HepG2 (cell line): ENCODE measurements at regions of chr7 and their contacts with region 1.

Region 1: DNA sequence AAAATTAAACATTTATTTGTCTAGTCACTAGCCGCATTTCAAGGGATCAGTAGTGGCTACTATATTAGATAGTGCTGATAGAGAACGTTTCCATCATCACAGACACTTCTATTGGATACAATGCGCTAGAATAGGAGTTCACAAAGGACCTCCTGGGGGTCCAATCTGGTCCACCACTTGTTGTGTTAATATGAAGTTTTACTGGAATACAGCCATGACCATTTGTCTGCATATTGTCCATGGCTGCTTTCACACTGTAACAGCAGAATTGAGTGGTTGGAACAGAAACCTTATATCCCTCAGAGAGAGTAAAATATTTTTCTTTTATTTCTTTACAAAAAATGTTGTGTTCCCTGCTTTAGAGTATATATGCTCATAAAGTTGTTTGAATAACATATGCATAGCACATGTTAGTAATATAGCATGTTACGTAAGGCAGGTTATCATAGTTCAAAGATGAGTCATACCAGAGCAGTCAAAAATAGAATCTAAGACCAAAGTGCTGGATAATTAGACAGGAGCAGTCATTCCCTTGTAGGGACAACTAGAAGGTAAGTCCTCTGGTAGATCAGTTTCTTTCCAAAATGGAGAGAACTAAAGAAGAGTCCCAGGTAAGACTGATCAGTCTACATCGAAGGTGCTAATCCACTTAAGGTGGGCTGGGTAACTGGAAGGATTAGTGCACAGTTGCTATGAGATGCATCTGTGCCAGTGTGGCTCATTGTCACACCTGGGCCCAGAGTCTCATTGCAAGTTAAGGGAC is 14.9 kb downstream of the BZW2 start:
- DNase-seq: peak; percentile 82
- ATAC-seq: peak; percentile 91
- H3K4me3 ChIP-seq: no peak overlapping the region; a peak in 2 of 6 replicates
- H3K27ac ChIP-seq: peak overlapping the region; percentile 53
- H3K4me1 ChIP-seq: peaks cover 24% of the 10 kb centered on the region
- H3K27me3 ChIP-seq: no peaks in the 10 kb centered on the region
- CTCF ChIP-seq: no peak
- EP300 ChIP-seq: peak in 1 of 2 experiments; percentile 34; a peak in 1 of 4 replicates
- POLR2A ChIP-seq: no peak
- RAD21 ChIP-seq: no peak

Region 2: DNA sequence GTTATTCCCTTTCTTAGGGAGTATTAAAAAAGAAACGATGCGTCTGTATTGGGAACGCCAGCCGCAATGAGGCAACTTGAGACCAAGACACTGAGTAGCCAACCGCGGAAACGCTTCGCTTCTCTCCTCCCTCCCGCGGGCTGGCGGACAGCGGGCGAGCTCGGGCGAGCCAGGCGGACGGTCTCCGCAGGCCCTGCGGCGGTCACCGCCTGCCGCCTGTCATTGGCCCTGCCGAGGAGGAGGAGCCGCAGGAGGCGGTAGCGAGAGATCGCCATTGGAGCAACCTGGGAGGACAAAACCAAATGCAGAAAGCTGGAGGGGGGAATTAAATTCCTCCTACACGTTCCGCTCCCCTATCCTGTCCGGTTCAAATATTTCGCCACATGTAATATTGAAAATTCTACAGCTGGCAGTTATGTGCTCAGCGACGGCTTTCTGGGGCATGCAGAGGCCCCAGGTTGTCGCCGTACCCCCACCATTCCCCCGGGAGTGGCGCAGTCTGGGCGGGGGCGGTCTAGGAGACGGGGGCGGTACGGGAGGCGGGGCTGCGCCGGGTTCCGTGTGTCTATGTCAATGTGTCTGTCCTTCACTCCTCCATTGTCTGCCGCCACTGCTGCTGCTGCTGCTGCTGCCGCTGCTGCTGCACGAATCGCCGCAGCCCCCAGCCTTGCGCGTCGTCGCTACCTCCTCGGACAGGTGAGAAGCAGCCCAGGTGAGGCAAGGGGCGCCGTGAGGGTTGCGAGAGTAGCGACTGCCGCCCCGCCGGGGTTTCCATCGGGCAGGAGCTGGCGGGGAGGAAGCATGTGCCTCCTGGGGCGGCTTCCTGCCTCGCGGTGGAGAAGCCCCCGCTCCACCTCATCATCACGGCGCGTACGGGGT is 15.1 kb before region 1 on chr7 and contains the starts of genes ANKMY2 and BZW2:
- CTCF ChIA-PET with region 1: no interaction called
- POLR2A ChIA-PET with region 1: interaction called, 8 read pairs
- in situ Hi-C with region 1: no loop called
- intact Hi-C with region 1: loop called (anchors 2 kb)
- DNase-seq: peak; percentile 91
- ATAC-seq: peak; percentile 93
- H3K4me3 ChIP-seq: peak within 1 kb of the TSS; percentile 92 to 97 (median 94)
- H3K27ac ChIP-seq: peak within 1 kb of the TSS; percentile 86
- H3K4me1 ChIP-seq: peaks cover 59% of the 10 kb centered on the region
- H3K27me3 ChIP-seq: no peaks in the 10 kb centered on the region; a peak in 1 of 5 replicates
- CTCF ChIP-seq: no peak; the same call in 1 of the 2 replicates
- EP300 ChIP-seq: no peak
- POLR2A ChIP-seq: peak; percentile 93 to 99
- RAD21 ChIP-seq: no peak
- total RNA-seq, gene ANKMY2: 21.6 and 32.0 TPM in 2 replicates
- total RNA-seq, gene BZW2: 95.2 and 111 TPM in 2 replicates

Region 3: DNA sequence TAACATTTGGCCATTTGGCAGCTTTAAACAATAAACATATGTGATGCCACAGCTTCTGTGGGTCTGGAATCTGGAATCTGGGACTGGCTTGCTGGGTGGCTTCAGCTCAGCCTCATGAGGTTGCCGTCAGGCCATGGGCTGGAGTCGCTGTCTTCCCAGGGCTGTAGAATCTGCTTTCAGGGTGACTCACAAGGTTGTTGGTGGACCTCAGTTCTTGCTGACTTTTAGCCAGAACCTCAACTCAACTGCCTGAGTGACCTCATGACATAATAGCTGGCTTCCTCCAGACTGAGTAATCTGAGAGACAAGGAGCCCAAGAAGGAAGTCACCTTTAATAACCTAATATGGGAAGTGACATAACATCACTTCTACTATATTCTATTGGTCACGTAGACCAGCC is 48.1 kb after region 1 on chr7:
- CTCF ChIA-PET with region 1: no interaction called
- POLR2A ChIA-PET with region 1: no interaction called
- in situ Hi-C with region 1: no loop called
- intact Hi-C with region 1: no loop called
- DNase-seq: no peak
- ATAC-seq: no peak
- H3K4me3 ChIP-seq: no peak overlapping the region
- H3K27ac ChIP-seq: no peak overlapping the region
- H3K4me1 ChIP-seq: no peaks in the 10 kb centered on the region
- H3K27me3 ChIP-seq: no peaks in the 10 kb centered on the region
- CTCF ChIP-seq: no peak
- EP300 ChIP-seq: no peak
- POLR2A ChIP-seq: no peak
- RAD21 ChIP-seq: no peak